ENCODE measurements at regions of chr9 and their contacts with region 1.

Region 1: GRCh38 chr9:126398403-126399058 is 71.9 kb downstream of the MVB12B start:
- DNase-seq: peak; percentile 93

Region 2: GRCh38 chr9:126301985-126302603 is 96.4 kb before region 1 on chr9:
- intact Hi-C with region 1: loop called (anchors 1 kb)
- DNase-seq: no peak

Region 3: GRCh38 chr9:126317513-126317912 is 81.0 kb before region 1 on chr9:
- intact Hi-C with region 1: loop called (anchors 5 kb)
- DNase-seq: no peak

Region 4: DNA sequence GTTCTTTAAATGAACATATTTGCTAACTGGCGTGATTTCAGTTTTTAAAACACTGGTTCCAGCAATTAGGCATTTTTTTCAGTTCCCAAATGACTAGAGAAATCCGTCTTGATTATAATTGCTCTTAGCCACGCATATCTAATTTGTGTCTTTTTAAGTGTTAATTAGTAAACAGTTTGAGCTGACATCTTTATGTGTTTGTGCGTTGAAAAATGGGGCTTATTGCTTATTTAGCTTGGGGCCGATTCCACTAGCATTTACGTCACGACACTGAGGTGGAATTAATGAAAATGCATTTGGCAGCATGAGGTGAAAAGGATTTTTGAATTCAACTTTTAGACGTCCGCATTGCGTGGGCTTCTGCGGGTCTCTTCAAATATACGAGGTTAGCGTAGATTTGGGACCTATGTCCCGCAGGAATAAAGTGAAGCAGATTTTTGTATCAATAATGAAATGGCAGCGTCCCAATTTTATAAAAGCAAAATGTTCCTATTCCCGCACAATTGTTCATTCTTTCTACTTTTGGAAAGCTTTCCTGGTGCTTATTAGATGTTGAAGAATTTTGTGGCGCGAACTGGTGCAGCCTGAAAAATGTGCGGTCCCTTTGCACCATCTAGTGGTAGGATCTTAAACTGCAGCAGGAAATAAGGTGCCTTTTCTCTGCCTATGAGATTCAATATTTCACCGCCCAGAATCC is 92.5 kb after region 1 on chr9:
- intact Hi-C with region 1: loop called (anchors 5 kb)
- DNase-seq: no peak

Measured in cardiac septum (tissue), 1 donor.